ENCODE measurements at regions of chr6 and their contacts with region 1.

Region 1: GRCh38 chr6:95439741-95440140 is 137.6 kb upstream of the MANEA start:
- DNase-seq: no peak
- H3K4me3 ChIP-seq: no peak overlapping the region
- H3K27ac ChIP-seq: no peak overlapping the region
- H3K4me1 ChIP-seq: no peaks in the 10 kb centered on the region
- H3K27me3 ChIP-seq: no peaks in the 10 kb centered on the region
- CTCF ChIP-seq: no peak

Region 2: DNA sequence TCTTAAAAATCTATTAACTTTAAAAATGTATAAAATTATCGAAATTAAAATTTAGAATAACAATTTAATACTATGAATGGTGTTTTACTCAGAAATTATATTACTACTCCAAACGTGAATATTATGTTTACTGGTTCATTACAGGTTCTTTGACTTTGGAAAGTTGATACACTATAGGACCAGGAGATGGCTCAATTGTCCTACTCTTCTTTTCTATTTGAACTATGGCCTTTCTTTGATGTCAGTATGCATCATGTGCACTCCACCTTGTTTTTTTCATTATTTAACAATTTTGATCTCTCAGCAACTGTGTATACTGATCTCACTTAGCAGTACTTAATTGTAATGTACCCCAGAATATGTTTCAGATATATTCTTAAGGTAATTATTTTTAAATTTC is 253.9 kb before region 1 on chr6:
- CTCF ChIA-PET with region 1: no interaction called
- POLR2A ChIA-PET with region 1: interaction called, 11 read pairs
- intact Hi-C with region 1: no loop called
- DNase-seq: no peak
- H3K4me3 ChIP-seq: no peak overlapping the region
- H3K27ac ChIP-seq: no peak overlapping the region
- H3K4me1 ChIP-seq: no peaks in the 10 kb centered on the region
- H3K27me3 ChIP-seq: no peaks in the 10 kb centered on the region
- CTCF ChIP-seq: no peak

Region 3: GRCh38 chr6:95240514-95240913 is 199.2 kb before region 1 on chr6:
- CTCF ChIA-PET with region 1: no interaction called
- POLR2A ChIA-PET with region 1: no interaction called
- intact Hi-C with region 1: no loop called
- DNase-seq: no peak
- H3K4me3 ChIP-seq: no peak overlapping the region
- H3K27ac ChIP-seq: no peak overlapping the region
- H3K4me1 ChIP-seq: peaks cover 17% of the 10 kb centered on the region; the same call in 1 of the 2 replicates
- H3K27me3 ChIP-seq: no peaks in the 10 kb centered on the region
- CTCF ChIP-seq: no peak

Region 4: DNA sequence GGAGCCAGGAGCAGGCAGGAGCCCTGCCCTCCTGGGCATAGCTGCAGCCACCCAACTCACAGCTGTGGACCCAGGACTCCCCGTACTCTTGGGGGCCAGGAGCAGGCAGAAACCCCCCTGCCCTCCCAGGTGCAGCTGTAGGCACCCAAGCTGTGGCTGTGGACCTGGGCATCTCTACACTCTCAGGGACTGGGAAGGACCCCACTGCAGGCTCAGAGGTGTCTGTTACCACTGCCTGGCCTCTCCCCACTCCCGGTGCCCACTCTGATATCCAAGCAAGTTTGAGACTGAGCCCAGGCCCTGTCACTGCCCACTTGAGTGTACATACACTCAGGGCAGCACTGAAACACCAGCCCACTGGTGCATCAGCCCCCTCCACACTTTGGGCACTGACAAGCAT is 55.9 kb before region 1 on chr6:
- CTCF ChIA-PET with region 1: no interaction called
- POLR2A ChIA-PET with region 1: no interaction called
- intact Hi-C with region 1: no loop called
- DNase-seq: no peak
- H3K4me3 ChIP-seq: no peak overlapping the region
- H3K27ac ChIP-seq: no peak overlapping the region
- H3K4me1 ChIP-seq: no peaks in the 10 kb centered on the region
- H3K27me3 ChIP-seq: no peaks in the 10 kb centered on the region
- CTCF ChIP-seq: no peak

Measured in PC-9 (cell line).